ENCODE measurements at regions of chr5 and their contacts with region 1.

Region 1: DNA sequence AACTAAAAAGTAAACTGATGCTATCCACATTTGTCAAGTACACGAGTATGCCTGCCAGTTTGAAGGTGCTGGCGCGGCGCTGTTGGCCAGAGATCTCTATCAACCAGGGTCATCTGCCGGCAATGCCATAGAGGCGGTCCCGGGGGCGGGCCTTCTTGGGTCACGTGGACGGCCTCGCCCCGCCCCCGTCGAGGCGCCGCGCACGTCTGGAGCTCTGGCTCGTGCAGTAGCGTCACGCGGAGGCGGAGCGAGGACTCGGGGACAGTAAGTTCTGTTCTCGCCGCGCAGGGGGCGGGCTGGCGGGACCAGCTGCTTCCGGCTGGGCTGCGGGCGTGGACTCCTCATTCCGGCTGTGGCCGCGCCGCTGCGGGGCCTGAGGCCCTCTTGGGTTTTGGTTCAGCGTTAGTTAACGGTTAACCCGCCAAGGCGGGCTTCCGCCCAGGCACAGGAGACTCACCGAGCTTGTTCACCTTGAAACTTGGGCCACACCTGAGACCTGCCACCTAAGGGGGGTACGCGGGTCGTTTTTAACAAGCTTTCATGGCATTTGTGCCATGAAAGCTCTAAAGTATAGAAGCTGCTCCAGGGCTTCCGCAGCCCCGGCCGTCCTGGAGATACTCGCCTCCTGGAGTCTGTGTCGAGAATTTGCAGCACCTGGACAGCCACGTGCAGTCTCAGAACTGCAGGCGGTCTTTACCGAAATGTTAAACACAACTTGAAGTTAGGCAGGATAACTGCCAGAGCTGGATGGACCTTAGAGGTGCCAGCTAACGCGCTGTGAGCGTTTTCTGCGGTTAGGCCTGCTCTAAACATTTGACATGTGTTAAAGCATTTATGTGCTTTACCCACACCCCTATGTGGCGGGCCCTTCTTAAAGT is at the start of gene RFESD:
- DNase-seq: peak; percentile 83
- ATAC-seq: peak; percentile 97
- H3K4me3 ChIP-seq: peak within 1 kb of the TSS; percentile 75
- H3K27ac ChIP-seq: peak within 1 kb of the TSS; percentile 80
- H3K4me1 ChIP-seq: peaks cover 5% of the 10 kb centered on the region
- H3K27me3 ChIP-seq: no peaks in the 10 kb centered on the region
- CTCF ChIP-seq: peak in 2 of 3 experiments; percentile 2 to 9; a peak in 1 of 6 replicates
- EP300 ChIP-seq: no peak
- POLR2A ChIP-seq: peak; percentile 88
- RAD21 ChIP-seq: 0 out of 2 replicates have a peak, but pooled peaks have one; percentile 1
- polyA plus RNA-seq, gene RFESD: 14.0 to 14.7 TPM

Region 2: GRCh38 chr5:95081500-95081960 is 565.3 kb before region 1 on chr5:
- CTCF ChIA-PET with region 1: no interaction called
- POLR2A ChIA-PET with region 1: no interaction called
- RAD21 ChIA-PET with region 1: no interaction called
- SMC1A ChIA-PET with region 1: no interaction called
- in situ Hi-C with region 1: no loop called
- intact Hi-C with region 1: no loop called
- DNase-seq: peak; percentile 89
- ATAC-seq: peak; percentile 85
- H3K4me3 ChIP-seq: peak overlapping the region; percentile 37
- H3K27ac ChIP-seq: peak overlapping the region; percentile 66
- H3K4me1 ChIP-seq: no peaks in the 10 kb centered on the region
- H3K27me3 ChIP-seq: no peaks in the 10 kb centered on the region
- CTCF ChIP-seq: no peak
- EP300 ChIP-seq: peak; percentile 26 to 55; a peak in 2 of 4 replicates
- POLR2A ChIP-seq: peak; percentile 85
- RAD21 ChIP-seq: no peak

Region 3: DNA sequence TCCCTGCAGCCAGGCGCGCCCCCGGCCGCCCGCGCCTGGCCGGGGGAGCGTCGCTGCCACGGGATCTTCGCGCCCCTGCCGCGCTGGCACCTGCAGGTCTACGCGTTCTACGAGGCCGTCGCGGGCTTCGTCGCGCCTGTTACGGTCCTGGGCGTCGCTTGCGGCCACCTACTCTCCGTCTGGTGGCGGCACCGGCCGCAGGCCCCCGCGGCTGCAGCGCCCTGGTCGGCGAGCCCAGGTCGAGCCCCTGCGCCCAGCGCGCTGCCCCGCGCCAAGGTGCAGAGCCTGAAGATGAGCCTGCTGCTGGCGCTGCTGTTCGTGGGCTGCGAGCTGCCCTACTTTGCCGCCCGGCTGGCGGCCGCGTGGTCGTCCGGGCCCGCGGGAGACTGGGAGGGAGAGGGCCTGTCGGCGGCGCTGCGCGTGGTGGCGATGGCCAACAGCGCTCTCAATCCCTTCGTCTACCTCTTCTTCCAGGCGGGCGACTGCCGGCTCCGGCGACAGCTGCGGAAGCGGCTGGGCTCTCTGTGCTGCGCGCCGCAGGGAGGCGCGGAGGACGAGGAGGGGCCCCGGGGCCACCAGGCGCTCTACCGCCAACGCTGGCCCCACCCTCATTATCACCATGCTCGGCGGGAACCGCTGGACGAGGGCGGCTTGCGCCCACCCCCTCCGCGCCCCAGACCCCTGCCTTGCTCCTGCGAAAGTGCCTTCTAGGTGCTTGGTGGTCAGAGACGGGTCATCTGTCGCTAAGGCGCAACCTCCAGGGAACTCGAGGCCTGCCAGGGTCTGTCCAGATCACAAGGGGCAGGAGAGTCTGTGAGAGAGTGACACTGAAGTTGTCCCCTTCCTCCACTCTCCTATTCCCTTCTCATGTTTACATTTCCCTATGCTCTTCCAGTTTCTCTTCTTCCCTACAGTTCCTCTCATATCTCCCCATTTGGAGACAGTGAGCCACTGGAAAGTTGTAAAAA is 25.6 kb before region 1 on chr5:
- CTCF ChIA-PET with region 1: interaction called, 14 read pairs
- POLR2A ChIA-PET with region 1: interaction called, 5 read pairs
- RAD21 ChIA-PET with region 1: interaction called, 7 read pairs
- SMC1A ChIA-PET with region 1: interaction called, 9 read pairs
- in situ Hi-C with region 1: no loop called
- intact Hi-C with region 1: no loop called
- DNase-seq: no peak
- ATAC-seq: peak; percentile 61
- H3K4me3 ChIP-seq: peak overlapping the region; percentile 62; the same call in 1 of the 2 replicates
- H3K27ac ChIP-seq: peak overlapping the region; percentile 21; the same call in 1 of the 2 replicates
- H3K4me1 ChIP-seq: peaks cover 19% of the 10 kb centered on the region
- H3K27me3 ChIP-seq: peaks cover 0 to 2% of the 10 kb centered on the region in 2 experiments; a peak in 1 of 4 replicates
- CTCF ChIP-seq: 0 out of 6 replicates have a peak, but pooled peaks of 1 of the 3 experiments have one; percentile 6
- EP300 ChIP-seq: no peak
- POLR2A ChIP-seq: no peak; the same call in 1 of the 2 replicates
- RAD21 ChIP-seq: no peak

Region 4: DNA sequence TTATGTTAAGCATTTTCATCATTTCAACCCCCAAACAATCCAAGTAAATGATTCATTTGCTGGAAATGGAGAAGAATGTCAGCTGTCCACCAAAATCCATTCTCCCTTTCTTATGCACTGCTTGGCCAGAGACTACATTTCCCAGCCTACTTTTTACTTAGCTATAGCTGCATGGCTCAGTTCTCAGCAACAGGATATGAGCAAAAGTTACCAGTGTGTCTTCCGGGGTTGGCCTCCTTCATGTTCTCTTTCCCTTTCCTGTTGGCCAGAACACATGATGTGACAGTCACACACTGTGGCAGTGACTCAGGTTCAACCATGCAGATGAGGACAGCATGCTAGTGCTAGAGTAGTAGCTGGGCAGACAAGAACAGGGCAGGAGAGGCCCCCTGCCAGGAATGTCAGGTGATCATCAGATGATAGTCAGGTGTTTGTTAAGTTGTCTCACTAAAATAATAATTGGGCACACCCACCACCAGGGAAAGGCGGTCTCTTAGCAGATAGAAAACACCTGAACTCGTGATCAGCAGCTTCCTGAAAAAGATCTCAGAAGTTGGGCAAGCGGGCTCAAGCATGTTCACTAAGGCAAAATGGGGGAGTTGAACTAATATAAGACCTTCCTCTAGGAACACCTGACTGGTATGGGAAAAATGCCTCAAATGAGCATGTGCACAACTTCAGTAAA is 14.7 kb before region 1 on chr5:
- CTCF ChIA-PET with region 1: interaction called, 20 read pairs
- POLR2A ChIA-PET with region 1: no interaction called
- RAD21 ChIA-PET with region 1: interaction called, 3 read pairs
- SMC1A ChIA-PET with region 1: interaction called, 6 read pairs
- in situ Hi-C with region 1: no loop called
- intact Hi-C with region 1: no loop called
- DNase-seq: no peak
- ATAC-seq: peak; percentile 98
- H3K4me3 ChIP-seq: no peak overlapping the region
- H3K27ac ChIP-seq: no peak overlapping the region
- H3K4me1 ChIP-seq: peaks cover 8% of the 10 kb centered on the region; the same call in 1 of the 2 replicates
- H3K27me3 ChIP-seq: no peaks in the 10 kb centered on the region
- CTCF ChIP-seq: no peak
- EP300 ChIP-seq: no peak
- POLR2A ChIP-seq: peak; percentile 61
- RAD21 ChIP-seq: no peak

Region 5: DNA sequence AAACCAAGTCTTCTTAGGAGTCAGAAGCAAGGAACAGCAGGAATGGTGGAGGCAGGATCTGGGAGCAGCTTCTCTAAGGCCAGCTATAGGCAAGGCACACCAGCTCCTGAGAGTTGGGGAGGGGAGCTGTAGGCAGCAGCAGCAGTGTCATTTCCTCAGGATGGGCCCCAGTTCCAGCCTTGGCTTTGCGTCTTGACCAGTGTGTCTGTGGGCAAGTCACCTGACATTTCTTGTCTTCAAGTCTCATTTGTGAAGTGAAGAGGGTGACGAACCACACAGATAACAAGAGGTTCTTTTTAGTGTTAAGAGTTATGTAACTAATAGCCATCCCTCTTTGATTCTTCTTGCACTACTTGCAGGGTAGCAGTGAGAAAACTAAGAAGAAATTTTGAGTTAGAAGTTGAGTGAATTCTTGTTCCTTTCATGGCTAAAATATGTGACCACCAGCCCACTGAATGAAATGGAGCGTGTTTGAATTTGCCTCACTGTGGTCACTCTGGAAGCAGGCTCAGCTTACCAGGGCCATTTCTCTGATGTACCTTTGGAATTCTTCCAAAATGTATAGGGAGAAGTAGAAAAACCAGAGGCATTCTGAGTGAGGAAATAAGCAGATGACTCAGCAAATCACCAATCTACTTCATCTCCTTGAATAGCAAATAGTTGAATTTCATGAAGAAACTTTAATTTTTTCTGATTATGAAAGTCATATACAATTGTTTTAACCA is 126.7 kb after region 1 on chr5:
- CTCF ChIA-PET with region 1: interaction called, 20 read pairs
- POLR2A ChIA-PET with region 1: no interaction called
- RAD21 ChIA-PET with region 1: interaction called, 4 read pairs
- SMC1A ChIA-PET with region 1: interaction called, 11 read pairs
- in situ Hi-C with region 1: no loop called
- intact Hi-C with region 1: no loop called
- DNase-seq: no peak
- ATAC-seq: peak; percentile 35; the same call in 2 of the 3 replicates
- H3K4me3 ChIP-seq: no peak overlapping the region
- H3K27ac ChIP-seq: no peak overlapping the region
- H3K4me1 ChIP-seq: peaks cover 4% of the 10 kb centered on the region; the same call in 1 of the 2 replicates
- H3K27me3 ChIP-seq: no peaks in the 10 kb centered on the region
- CTCF ChIP-seq: no peak
- EP300 ChIP-seq: no peak
- POLR2A ChIP-seq: no peak
- RAD21 ChIP-seq: no peak

Region 6: GRCh38 chr5:95822542-95823181 is 175.9 kb after region 1 on chr5 and contains the start of gene GLRX:
- CTCF ChIA-PET with region 1: interaction called, 5 read pairs
- POLR2A ChIA-PET with region 1: interaction called, 12 read pairs
- RAD21 ChIA-PET with region 1: interaction called, 8 read pairs
- SMC1A ChIA-PET with region 1: interaction called, 8 read pairs
- in situ Hi-C with region 1: no loop called
- intact Hi-C with region 1: no loop called
- DNase-seq: no peak
- ATAC-seq: peak; percentile 66
- H3K4me3 ChIP-seq: peak within 1 kb of the TSS; percentile 87
- H3K27ac ChIP-seq: peak within 1 kb of the TSS; percentile 86
- H3K4me1 ChIP-seq: peaks cover 26% of the 10 kb centered on the region
- H3K27me3 ChIP-seq: no peaks in the 10 kb centered on the region
- CTCF ChIP-seq: no peak
- EP300 ChIP-seq: 0 out of 4 replicates have a peak, but pooled peaks of 1 of the 2 experiments have one; percentile 33
- POLR2A ChIP-seq: peak; percentile 69
- RAD21 ChIP-seq: no peak
- polyA plus RNA-seq, gene GLRX: 311 to 366 TPM

Measured in GM12878 (cell line).